ENCODE measurements at regions of chr10 and their contacts with region 1.

Region 1: DNA sequence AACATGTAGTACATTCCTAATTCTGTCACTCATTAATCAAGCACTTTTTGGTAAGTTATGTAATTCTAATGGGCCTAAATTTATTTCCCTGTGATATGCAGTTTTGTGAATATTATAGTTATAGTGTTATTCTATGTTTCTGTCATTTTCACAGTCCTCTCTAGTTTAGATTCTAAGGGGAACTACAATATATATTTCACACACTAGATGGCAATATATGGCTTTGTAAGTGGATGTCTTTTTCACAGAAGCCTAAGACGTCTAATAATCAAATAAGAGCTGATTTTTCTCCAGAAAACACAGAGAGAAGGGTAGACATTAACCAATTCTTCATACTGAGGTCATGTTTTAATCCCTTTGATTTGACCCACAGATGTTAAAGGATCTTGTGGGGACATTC is 18.0 kb downstream of the RNLS start:
- DNase-seq: peak; percentile 61
- ATAC-seq: peak; percentile 85
- H3K4me3 ChIP-seq: no peak overlapping the region
- H3K27ac ChIP-seq: no peak overlapping the region
- H3K4me1 ChIP-seq: no peaks in the 10 kb centered on the region
- H3K27me3 ChIP-seq: no peaks in the 10 kb centered on the region; the same call in 1 of the 2 replicates
- CTCF ChIP-seq: peak; percentile 63
- POLR2A ChIP-seq: no peak
- RAD21 ChIP-seq: peak; percentile 74

Region 2: DNA sequence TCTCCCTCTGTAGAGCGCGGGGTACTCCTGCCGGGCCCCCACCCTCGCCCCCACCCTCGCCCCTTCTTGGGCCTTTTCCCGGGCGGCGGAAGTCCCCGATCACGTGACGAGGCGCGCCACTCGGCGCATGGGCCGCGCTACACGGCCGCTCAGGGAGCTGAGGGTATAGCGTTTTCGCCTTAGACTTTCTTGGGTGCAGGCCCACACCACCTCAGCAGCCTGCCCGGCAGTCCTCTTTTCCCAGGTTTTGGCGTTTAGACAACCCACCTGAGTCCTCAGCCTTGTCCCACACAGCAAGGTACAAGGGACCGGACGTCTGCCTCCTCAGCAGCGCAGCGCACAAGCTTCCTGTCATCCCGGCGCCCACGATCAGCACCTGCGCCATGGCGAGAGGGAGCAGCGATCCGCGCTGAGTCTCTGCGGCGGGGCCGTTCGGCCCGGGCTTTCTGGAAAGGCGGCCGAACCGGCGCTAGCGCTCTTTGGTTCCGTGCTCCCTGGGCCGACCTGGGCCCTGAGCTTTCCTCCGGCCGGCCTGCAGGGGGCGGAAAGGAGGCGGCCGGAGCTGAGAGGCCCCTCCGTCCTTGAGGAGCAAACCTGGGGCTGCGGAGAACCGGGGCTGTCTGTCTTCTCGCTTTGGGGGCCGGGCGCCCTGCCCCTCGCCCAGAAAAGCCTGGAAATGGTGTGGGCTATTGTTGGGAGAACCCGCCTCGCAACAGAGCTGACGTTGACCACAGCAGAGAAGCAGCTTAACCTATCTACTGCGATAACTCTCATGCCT is 17.9 kb after region 1 on chr10 and contains the start of gene RNLS:
- CTCF ChIA-PET with region 1: interaction called, 10 read pairs
- POLR2A ChIA-PET with region 1: no interaction called
- dilution Hi-C with region 1: no loop called
- in situ Hi-C with region 1: no loop called
- intact Hi-C with region 1: no loop called
- DNase-seq: peak; percentile 15
- ATAC-seq: peak; percentile 96
- H3K4me3 ChIP-seq: peak within 1 kb of the TSS; percentile 59
- H3K27ac ChIP-seq: peak within 1 kb of the TSS; percentile 46
- H3K4me1 ChIP-seq: no peaks in the 10 kb centered on the region
- H3K27me3 ChIP-seq: no peaks in the 10 kb centered on the region
- CTCF ChIP-seq: peak; percentile 55
- POLR2A ChIP-seq: no peak
- RAD21 ChIP-seq: peak; percentile 31; the same call in 1 of the 2 replicates
- total RNA-seq, gene RNLS: 4.2 and 7.0 TPM in 2 replicates

Region 3: DNA sequence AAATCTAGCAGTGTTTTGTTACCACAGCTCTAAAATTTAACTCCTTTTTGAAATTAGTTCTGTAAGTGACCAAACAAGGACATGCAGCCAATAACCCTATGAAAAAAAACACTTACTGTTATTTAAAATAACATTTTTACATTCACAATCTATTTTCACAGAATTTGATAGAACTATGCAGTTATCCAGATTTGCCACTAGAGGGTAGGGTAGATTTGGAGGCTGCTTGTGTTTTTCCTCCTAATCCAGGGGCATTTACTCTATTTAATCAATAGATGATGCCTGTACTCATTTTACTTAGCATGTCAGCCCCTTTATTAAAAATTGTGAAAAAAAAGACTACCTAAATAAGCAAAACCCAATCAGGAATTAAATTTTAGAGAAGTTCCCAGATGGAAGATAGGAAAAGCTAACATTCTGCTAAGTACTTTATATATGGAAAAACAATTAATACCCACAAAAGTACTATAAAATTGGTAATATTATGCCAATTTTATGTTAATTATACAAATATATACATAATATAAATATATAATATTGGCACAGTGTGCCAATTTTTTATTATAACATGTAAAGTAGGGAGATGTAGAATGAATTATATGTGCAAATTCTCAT is 122.9 kb after region 1 on chr10:
- CTCF ChIA-PET with region 1: no interaction called
- POLR2A ChIA-PET with region 1: no interaction called
- dilution Hi-C with region 1: no loop called
- in situ Hi-C with region 1: no loop called
- intact Hi-C with region 1: loop called (anchors 1 kb)
- DNase-seq: peak; percentile 24
- ATAC-seq: peak; percentile 72; the same call in 1 of the 2 replicates
- H3K4me3 ChIP-seq: no peak overlapping the region
- H3K27ac ChIP-seq: no peak overlapping the region
- H3K4me1 ChIP-seq: no peaks in the 10 kb centered on the region
- H3K27me3 ChIP-seq: no peaks in the 10 kb centered on the region; the same call in 1 of the 2 replicates
- CTCF ChIP-seq: peak; percentile 75
- POLR2A ChIP-seq: no peak
- RAD21 ChIP-seq: peak; percentile 69

Region 4: GRCh38 chr10:88810196-88810961 is 245.3 kb after region 1 on chr10:
- CTCF ChIA-PET with region 1: interaction called, 9 read pairs
- POLR2A ChIA-PET with region 1: no interaction called
- dilution Hi-C with region 1: no loop called
- in situ Hi-C with region 1: loop called (anchors 5 kb)
- intact Hi-C with region 1: loop called (anchors 1 kb)
- DNase-seq: peak; percentile 72
- ATAC-seq: peak; percentile 75
- H3K4me3 ChIP-seq: no peak overlapping the region
- H3K27ac ChIP-seq: no peak overlapping the region
- H3K4me1 ChIP-seq: no peaks in the 10 kb centered on the region
- H3K27me3 ChIP-seq: peaks cover 8% of the 10 kb centered on the region
- CTCF ChIP-seq: peak; percentile 79
- POLR2A ChIP-seq: no peak
- RAD21 ChIP-seq: peak; percentile 67

Measured in IMR-90 (cell line).